Dorsolateral prefrontal cortex (tissue), 120 donors: ENCODE measurements at regions of chr6 and their contacts with region 1.

Region 1: GRCh38 chr6:43120944-43121913 is 45.1 kb downstream of the PTK7 start:
- DNase-seq: no peak
- H3K4me3 ChIP-seq: no peak overlapping the region
- H3K27ac ChIP-seq: peak overlapping the region in 27 of 59 donors; percentile 5 to 72 (median 33)
- H3K27me3 ChIP-seq: no peaks in the 10 kb centered on the region
- CTCF ChIP-seq: no peak

Region 2: DNA sequence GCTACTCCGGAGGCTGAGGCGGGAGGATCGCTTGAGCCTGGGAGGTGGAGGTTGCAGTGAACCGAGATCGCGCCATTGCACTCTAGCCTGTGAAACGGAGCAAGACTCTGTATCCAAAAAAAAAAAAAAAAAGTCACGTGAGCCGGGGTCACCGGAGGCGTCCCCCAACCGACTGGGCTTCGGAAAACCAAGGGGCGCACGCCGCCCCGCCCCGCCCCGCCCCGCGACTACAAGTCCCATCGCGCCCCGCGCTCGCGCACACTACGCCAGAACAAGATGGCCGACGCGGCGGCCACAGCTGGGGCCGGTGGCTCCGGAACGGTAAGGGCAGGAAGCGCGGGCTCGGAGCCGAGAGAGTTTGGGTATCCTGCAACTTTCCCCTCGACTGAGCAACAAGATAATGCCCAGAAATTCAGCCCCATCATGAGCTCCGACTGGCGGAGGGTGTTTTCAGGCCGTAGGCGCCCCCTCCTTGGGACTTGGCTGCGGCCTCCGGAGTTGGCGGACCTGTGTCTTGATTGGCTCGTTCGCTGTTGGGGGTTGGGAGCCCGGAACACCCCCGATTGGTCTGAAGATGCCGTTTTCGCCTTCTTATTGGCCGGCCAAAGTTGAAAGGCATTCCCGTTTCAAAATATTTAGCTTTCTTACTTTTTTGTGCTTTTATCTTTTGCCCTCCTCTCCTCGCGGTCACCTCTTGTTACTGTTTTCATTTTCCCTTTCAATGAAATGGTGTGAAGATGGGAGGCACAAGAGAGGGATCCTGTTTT is 1070.8 kb before region 1 on chr6 and contains the start of gene TAF8:
- intact Hi-C with region 1: no loop called
- DNase-seq: peak; percentile 84 to 94 (median 92)
- H3K4me3 ChIP-seq: peak within 1 kb of the TSS; percentile 46 to 95 (median 78)
- H3K27ac ChIP-seq: peak within 1 kb of the TSS; percentile 84 to 100 (median 96)
- H3K27me3 ChIP-seq: no peaks in the 10 kb centered on the region
- CTCF ChIP-seq: peak in 35 of 56 donors; percentile 5 to 64 (median 35)
- total RNA-seq, gene TAF8: 17.7 to 55.8 (median 29.5) TPM

Region 3: GRCh38 chr6:43075670-43076463 is 45.4 kb before region 1 on chr6 and contains the start of gene PTK7:
- intact Hi-C with region 1: loop called in 1 of 2 experiments (anchors 5 kb)
- DNase-seq: peak in 4 of 10 donors; percentile 17 to 59 (median 28)
- H3K4me3 ChIP-seq: peak within 1 kb of the TSS; percentile 15 to 81 (median 63)
- H3K27ac ChIP-seq: peak within 1 kb of the TSS in 11 of 59 donors; percentile 3 to 63 (median 35)
- H3K27me3 ChIP-seq: peaks cover 0 to 12% (median 0%) of the 10 kb centered on the region in 45 donors
- CTCF ChIP-seq: no peak
- total RNA-seq, gene PTK7: 5.8 to 26.2 (median 13.0) TPM